ENCODE measurements at regions of chr14 and their contacts with region 1.

Region 1: DNA sequence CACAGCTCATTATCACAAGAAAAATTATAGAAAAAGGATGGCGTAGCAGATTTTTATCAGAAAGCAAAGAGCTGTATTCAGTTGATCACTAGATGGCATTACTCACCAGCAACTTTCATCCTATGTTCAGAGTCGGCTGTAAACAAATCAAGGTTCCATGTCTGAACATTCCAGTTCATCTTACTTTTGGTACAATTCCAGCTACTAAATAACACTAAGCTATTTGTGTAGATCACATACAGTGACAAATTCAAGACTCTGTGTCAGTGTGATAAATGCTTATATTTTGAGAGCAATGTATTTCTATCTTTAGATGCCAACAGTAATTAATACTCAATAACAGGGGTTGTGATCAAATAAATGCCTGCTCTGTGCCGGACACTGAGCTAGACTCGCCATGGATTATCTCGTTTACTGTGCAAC is 30.1 kb downstream of the NRDE2 start:
- DNase-seq: no peak
- H3K4me3 ChIP-seq: no peak overlapping the region
- H3K27ac ChIP-seq: peak overlapping the region; percentile 43 to 66
- H3K4me1 ChIP-seq: no peaks in the 10 kb centered on the region
- H3K27me3 ChIP-seq: no peaks in the 10 kb centered on the region
- CTCF ChIP-seq: peak in 3 of 4 experiments; percentile 52 to 85 (median 67)
- POLR2A ChIP-seq: no peak

Region 2: DNA sequence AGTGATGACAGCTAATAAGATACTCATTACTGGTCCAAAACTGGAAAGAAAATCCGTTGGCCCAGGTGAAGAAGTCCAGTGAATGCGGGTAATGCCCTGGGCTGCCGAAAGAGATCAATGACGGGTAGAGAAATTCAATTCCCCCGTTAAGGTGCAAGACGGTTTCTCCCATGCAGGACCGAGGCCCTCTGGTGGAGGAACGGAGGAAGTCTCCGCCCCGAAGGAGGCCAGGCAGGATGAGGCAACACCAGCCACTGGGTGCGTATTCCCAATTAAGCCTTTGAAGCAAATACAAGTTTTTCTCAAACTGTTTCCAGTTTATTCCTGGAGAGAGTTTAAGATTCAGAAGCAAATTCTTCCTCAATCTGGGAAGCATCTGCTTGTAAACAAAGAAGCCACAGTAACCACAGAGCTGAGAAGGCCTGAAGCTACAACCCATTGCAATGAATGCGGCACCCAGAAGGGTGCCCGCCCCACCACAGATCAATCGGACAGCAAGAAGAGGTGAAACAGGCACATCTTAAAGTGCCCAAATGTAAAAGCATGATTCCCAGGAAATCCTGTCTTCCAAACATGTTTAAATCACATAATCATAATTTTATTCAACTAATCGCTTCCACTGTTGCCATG is 396.0 kb after region 1 on chr14:
- intact Hi-C with region 1: loop called (anchors 5 kb)
- DNase-seq: peak; percentile 82
- H3K4me3 ChIP-seq: no peak overlapping the region
- H3K27ac ChIP-seq: peak overlapping the region; percentile 67 to 72
- H3K4me1 ChIP-seq: peaks cover 17% of the 10 kb centered on the region
- H3K27me3 ChIP-seq: no peaks in the 10 kb centered on the region
- CTCF ChIP-seq: peak; percentile 82 to 96 (median 90)
- POLR2A ChIP-seq: no peak

Region 3: GRCh38 chr14:90758028-90758889 is 456.6 kb after region 1 on chr14:
- intact Hi-C with region 1: loop called (anchors 5 kb)
- DNase-seq: peak; percentile 91
- H3K4me3 ChIP-seq: peak overlapping the region; percentile 35 to 42
- H3K27ac ChIP-seq: peak overlapping the region; percentile 85 to 87
- H3K4me1 ChIP-seq: peaks cover 8% of the 10 kb centered on the region
- H3K27me3 ChIP-seq: no peaks in the 10 kb centered on the region
- CTCF ChIP-seq: peak; percentile 93 to 98 (median 96)
- POLR2A ChIP-seq: peak; percentile 8

Region 4: DNA sequence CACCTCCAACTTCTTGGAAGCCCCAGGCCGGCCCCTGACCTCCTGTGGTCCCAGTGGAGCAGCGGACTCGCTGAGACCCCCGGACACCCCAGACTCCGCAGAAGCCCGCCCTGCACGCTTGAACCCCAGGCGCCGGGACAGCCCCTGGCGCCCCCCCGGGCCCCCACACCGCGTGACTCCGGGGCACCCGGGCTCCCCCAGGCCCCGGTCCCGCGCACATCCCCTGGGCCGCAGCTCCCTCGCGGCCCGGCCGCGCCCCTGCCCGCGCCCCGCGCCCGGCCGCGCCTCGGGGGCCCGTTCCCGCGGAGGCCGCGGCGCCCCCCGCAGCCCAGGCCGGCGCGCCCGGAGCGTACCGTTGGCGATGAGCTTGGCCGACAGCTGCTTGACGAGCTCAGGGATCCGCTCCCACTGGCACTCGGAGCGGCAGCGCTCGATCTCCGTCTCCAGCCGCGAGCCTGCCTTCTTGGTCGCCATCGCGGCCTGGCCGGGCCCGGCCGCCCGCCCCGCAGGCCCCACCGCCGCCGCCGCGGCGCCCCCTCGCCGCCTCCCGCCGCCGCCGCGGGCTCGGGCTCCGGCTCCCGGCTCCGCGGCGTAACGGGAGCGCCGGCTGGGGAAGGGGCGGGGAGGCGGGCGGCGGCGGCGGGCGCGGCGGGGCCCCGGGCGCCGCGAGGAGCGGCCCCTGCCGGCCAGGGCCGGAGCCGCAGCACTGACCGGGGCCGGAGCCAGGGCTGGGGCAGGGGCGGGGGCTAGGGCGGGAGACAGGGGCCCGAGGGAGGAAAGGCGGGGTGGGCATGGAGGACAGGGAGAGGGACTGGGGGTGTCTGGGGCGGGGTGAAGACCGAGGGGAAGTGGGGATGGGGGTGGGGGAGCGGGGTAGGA is 514.4 kb after region 1 on chr14 and contains the start of gene TTC7B:
- intact Hi-C with region 1: loop called (anchors 10 kb)
- DNase-seq: no peak
- H3K4me3 ChIP-seq: peak within 1 kb of the TSS; percentile 51 to 55
- H3K27ac ChIP-seq: peak within 1 kb of the TSS in 1 of 2 donors; percentile 43
- H3K4me1 ChIP-seq: peaks cover 5% of the 10 kb centered on the region
- H3K27me3 ChIP-seq: no peaks in the 10 kb centered on the region
- CTCF ChIP-seq: no peak
- POLR2A ChIP-seq: no peak
- total RNA-seq, gene TTC7B: 25.0 to 40.7 TPM